PC-9 (cell line): ENCODE measurements at regions of chr9 and their contacts with region 1.

Region 1: DNA sequence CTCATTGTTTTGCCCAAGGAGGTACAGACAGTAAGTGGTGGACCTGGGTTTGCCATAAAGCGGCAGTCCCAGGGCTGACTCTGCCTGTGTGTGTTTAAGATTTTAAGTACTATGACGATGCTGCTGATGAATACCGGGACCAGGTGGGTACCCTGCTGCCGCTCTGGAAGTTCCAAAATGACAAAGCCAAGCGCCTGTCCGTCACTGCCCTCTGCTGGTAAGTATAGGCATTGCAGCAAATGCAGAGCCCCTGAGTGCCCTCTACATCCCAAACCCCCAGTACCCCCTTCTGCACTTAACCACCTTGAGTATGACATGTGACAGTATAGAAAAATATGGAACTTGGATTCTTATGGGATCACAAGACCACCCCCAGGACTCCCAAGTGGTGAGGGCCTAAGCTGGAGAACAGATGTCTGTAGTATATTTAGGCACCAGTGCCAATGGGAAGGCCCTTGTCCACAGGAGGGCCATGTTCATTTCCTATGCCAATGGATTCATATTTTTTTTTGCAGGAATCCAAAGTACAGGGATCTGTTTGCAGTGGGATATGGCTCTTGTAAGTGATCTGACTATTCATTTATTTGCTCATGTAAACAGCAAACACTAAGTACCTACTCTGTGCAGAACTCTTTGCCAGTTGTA is 22.0 kb downstream of the ENHO start:
- DNase-seq: peak in 1 of 2 experiments; percentile 46
- H3K4me3 ChIP-seq: no peak overlapping the region
- H3K27ac ChIP-seq: no peak overlapping the region
- H3K4me1 ChIP-seq: no peaks in the 10 kb centered on the region
- H3K27me3 ChIP-seq: 0 out of 2 replicates have a peak, but pooled peaks cover 7% of the 10 kb centered on the region
- CTCF ChIP-seq: peak; percentile 91

Region 2: DNA sequence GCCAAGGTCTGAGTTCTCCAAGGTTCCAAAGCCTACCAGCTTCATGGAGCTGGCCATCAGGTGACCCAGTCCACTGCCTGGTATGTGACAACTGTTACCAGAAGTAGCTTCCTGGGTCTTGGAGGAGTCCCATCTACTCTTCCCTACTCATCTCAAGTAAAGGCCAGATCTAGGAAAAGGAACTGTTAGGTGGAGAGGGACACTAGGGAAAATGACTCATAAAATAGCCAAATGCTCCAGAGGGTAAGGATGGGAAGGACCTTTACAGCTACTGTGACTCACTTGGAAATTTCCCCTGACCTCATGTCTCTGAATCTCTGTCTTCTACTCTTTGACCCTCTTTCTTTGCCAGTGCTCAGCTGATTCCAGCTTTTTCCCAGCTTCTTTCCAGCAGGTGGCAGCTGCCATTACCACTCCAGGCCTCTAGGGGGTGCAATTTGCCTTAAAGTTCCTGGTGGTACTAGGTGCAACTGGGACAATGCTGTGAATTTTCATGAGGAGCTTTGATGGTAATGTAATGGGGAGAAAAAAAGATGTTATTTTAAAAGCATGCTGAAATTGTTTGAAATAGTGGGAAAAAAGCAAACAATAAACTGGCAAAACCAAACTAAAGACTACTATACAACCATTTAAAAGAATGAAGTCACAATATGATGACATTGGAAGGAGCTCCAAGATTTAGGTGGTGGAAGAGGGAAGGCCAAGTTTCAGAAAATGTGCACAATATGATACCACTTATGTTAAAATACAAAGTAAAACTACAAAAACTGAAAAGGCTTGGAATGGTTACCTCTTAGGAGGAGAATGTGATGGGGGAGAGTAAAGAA is 97.0 kb before region 1 on chr9:
- CTCF ChIA-PET with region 1: no interaction called
- POLR2A ChIA-PET with region 1: no interaction called
- intact Hi-C with region 1: loop called (anchors 1 kb)
- DNase-seq: peak; percentile 40 to 50
- H3K4me3 ChIP-seq: no peak overlapping the region
- H3K27ac ChIP-seq: no peak overlapping the region
- H3K4me1 ChIP-seq: no peaks in the 10 kb centered on the region
- H3K27me3 ChIP-seq: no peaks in the 10 kb centered on the region
- CTCF ChIP-seq: peak; percentile 93

Region 3: DNA sequence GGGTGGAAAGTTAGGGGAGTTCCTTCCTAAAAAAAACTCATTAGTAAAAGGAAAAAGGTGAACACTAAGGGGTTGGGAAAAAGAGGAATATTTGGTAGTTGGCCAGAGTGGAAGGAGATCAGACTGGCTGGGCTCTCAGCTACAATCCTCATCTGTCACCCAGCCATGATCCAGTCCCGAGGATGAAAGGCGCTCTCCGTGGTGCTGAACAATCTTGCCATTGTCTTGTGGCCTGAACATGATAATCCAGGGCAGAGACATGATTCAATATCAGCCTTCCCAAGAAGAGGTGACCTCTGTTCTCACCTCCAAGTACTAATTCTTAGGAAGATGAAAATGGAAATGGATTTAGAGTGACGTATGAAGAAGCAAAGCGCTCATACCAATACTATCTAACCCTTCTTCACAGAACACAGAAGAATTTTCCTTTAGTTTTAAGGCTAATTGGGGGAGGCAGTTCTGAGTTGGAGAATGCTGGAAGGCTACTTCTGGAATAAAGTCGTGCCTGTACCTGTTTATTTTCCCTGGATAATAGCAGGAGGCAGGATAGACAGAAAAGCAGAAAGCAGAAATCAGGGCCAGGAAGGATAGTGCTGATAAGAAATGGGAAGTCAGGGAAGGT is 87.4 kb before region 1 on chr9:
- CTCF ChIA-PET with region 1: interaction called, 11 read pairs
- POLR2A ChIA-PET with region 1: no interaction called
- intact Hi-C with region 1: no loop called
- DNase-seq: peak in 1 of 2 experiments; percentile 29
- H3K4me3 ChIP-seq: no peak overlapping the region
- H3K27ac ChIP-seq: no peak overlapping the region
- H3K4me1 ChIP-seq: no peaks in the 10 kb centered on the region
- H3K27me3 ChIP-seq: no peaks in the 10 kb centered on the region
- CTCF ChIP-seq: no peak

Region 4: DNA sequence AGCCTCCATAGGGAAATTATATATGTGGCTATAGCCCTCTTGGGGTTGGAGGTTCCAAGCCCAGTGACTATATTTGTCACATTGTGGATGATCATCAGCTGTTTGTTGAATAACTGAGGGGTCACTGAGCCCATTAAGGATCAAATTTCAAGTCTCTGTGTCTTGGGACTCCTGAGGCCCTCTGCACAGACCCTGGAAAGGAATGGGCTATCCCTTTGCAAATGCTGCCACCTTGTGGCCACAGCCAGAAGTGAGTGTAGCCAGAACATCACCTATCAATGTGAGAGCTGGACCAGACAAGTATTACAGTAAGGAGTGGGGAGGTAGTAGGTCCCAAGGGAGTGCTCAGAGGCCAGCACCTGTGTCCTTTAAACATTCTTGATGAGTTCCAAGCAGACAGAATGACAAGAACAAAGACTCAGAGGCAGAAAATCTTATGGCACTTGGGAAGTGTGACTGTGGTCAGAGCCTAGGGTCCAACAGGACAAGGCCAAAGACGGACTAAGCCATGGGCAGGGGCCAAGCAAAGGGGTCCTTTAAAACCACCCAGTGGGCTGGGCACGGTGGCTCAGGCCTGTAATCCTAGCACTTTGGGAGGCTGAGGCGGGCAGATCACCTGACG is 103.0 kb after region 1 on chr9:
- CTCF ChIA-PET with region 1: no interaction called
- POLR2A ChIA-PET with region 1: no interaction called
- intact Hi-C with region 1: loop called (anchors 5 kb)
- DNase-seq: peak; percentile 37 to 63
- H3K4me3 ChIP-seq: no peak overlapping the region
- H3K27ac ChIP-seq: no peak overlapping the region
- H3K4me1 ChIP-seq: no peaks in the 10 kb centered on the region
- H3K27me3 ChIP-seq: no peaks in the 10 kb centered on the region
- CTCF ChIP-seq: peak; percentile 90